Common myeloid progenitor, CD34-positive (primary cell): ENCODE measurements at regions of chr1 and their contacts with region 1.

Region 1: DNA sequence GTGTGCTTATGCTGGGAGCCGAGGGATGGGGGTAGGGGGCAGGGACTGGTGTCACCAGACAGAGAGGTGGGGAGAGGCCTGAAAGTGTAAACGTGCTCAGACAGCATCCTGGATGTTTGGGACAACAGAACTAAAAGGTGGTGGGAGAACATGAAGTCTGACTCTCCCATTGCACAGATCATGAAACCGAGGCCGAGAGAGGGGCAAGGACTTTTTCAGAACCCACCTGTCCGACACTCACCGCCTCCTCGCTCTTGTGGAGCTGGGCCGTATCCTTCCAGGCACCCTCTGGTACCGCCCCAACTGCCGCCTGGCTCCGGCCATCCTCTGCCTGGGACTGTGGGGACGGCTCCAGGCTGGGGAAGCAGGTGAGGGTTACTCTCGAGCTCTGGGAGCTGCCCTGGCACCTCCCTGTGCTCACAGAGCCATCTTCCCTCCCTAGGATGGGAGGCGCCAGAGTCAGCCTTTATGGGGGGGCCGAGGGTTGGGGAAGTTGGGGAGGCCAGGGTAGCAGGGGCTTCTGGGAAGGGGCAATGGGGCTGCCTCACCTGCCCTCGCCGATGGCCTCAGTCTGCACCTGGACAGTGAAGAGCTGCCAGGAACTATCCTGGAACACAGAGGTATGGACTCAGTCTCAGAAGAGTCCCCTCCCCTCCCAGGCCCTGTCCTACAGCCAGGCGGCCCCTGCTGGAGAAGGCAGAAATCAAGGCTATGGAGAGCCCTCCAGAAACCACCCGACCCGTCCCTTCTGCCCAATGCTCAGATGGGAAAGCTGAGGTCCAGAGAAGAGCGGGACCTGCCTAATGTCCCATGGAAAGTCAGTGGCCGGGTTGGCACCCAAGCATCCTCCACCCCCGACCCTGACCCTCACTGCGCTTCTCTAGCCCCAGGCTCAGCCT is 7.0 kb downstream of the ATP13A2 start:
- DNase-seq: no peak
- H3K4me3 ChIP-seq: no peak overlapping the region
- H3K27ac ChIP-seq: no peak overlapping the region
- H3K4me1 ChIP-seq: peaks cover 0 to 10% (median 9%) of the 10 kb centered on the region in 4 experiments
- H3K27me3 ChIP-seq: no peaks in the 10 kb centered on the region

Region 2: GRCh38 chr1:16938351-16939321 is 66.1 kb before region 1 on chr1:
- CTCF ChIA-PET with region 1: no interaction called
- POLR2A ChIA-PET with region 1: no interaction called
- DNase-seq: no peak
- H3K4me3 ChIP-seq: no peak overlapping the region
- H3K27ac ChIP-seq: no peak overlapping the region
- H3K4me1 ChIP-seq: no peaks in the 10 kb centered on the region
- H3K27me3 ChIP-seq: no peaks in the 10 kb centered on the region

Region 3: DNA sequence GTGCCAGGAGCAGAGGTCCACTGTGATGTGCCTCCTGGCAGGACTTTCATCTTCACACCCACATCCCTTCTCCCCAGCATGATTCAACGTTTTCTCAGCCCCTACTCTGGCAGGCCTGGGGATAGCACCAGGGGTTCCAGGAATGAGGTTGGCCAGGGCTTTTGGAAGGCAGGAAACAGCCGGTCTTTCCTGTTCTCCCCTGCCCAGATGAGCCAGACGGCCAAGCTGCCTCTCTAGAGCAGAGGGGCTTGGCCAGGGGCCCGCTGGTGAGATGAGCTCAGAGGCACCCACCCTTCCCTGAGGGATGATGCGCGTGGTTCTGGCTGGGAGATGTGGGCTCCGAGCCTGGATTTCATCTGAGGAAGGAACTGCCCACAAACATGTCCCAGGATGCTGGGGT is 20.0 kb before region 1 on chr1:
- CTCF ChIA-PET with region 1: interaction called, 24 read pairs
- POLR2A ChIA-PET with region 1: no interaction called
- DNase-seq: peak in 2 of 3 donors; percentile 66
- H3K4me3 ChIP-seq: no peak overlapping the region
- H3K27ac ChIP-seq: no peak overlapping the region
- H3K4me1 ChIP-seq: peaks cover 0 to 25% (median 18%) of the 10 kb centered on the region in 4 experiments
- H3K27me3 ChIP-seq: peaks cover 0 to 11% (median 0%) of the 10 kb centered on the region in 5 experiments

Region 4: GRCh38 chr1:17060461-17060816 is 55.7 kb after region 1 on chr1:
- CTCF ChIA-PET with region 1: no interaction called
- POLR2A ChIA-PET with region 1: no interaction called
- DNase-seq: peak in 2 of 3 donors; percentile 24 to 27
- H3K4me3 ChIP-seq: no peak overlapping the region
- H3K27ac ChIP-seq: no peak overlapping the region
- H3K4me1 ChIP-seq: peaks cover 0 to 20% (median 2%) of the 10 kb centered on the region in 4 experiments
- H3K27me3 ChIP-seq: no peaks in the 10 kb centered on the region

Region 5: GRCh38 chr1:17957588-17958260 is 953.0 kb after region 1 on chr1:
- CTCF ChIA-PET with region 1: no interaction called
- POLR2A ChIA-PET with region 1: no interaction called
- DNase-seq: no peak
- H3K4me3 ChIP-seq: no peak overlapping the region
- H3K27ac ChIP-seq: no peak overlapping the region
- H3K4me1 ChIP-seq: no peaks in the 10 kb centered on the region
- H3K27me3 ChIP-seq: peaks cover 0 to 34% (median 7%) of the 10 kb centered on the region in 5 experiments